Panc1 (cell line): ENCODE measurements at regions of chr1 and their contacts with region 1.

Region 1: GRCh38 chr1:97524211-97524610 is 396.6 kb downstream of the DPYD start:
- DNase-seq: no peak
- ATAC-seq: no peak
- H3K4me3 ChIP-seq: no peak overlapping the region
- H3K27ac ChIP-seq: no peak overlapping the region
- H3K4me1 ChIP-seq: no peaks in the 10 kb centered on the region
- H3K27me3 ChIP-seq: no peaks in the 10 kb centered on the region
- CTCF ChIP-seq: no peak

Region 2: DNA sequence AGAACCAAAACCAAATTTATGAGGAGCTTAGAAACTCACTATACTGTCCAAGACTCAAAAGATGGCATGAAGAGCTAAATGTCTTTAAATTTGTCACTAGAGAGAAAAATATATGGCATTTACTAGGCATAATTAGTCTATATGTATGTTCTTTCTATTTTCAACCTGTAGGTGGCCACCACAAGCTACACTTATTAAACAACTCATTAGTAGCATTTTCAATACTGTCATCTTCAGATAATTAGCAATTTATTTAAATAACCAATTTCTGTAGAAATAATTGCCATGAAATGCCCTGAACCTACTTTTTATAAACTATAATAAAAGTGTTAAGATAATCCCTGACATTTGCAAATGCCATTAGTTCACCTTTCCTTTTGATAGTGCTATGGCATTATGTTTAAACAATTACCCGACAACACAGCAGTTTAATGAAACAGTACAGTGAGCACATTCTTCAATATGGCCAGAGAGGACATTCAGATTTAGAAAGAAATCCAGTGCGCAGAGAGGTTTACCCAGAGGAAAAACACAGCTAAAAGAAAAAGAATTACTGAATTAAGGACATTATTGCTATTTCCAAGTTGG is 280.1 kb before region 1 on chr1:
- CTCF ChIA-PET with region 1: interaction called, 10 read pairs
- POLR2A ChIA-PET with region 1: no interaction called
- in situ Hi-C with region 1: no loop called
- intact Hi-C with region 1: no loop called
- DNase-seq: no peak
- ATAC-seq: no peak
- H3K4me3 ChIP-seq: no peak overlapping the region
- H3K27ac ChIP-seq: no peak overlapping the region
- H3K4me1 ChIP-seq: no peaks in the 10 kb centered on the region
- H3K27me3 ChIP-seq: no peaks in the 10 kb centered on the region
- CTCF ChIP-seq: peak; percentile 47; the same call in 1 of the 2 replicates

Region 3: GRCh38 chr1:97350662-97351061 is 173.5 kb before region 1 on chr1:
- CTCF ChIA-PET with region 1: no interaction called
- POLR2A ChIA-PET with region 1: no interaction called
- in situ Hi-C with region 1: no loop called
- intact Hi-C with region 1: no loop called
- DNase-seq: no peak
- ATAC-seq: no peak
- H3K4me3 ChIP-seq: no peak overlapping the region
- H3K27ac ChIP-seq: no peak overlapping the region
- H3K4me1 ChIP-seq: no peaks in the 10 kb centered on the region
- H3K27me3 ChIP-seq: no peaks in the 10 kb centered on the region
- CTCF ChIP-seq: no peak

Region 4: GRCh38 chr1:97505816-97506215 is 18.4 kb before region 1 on chr1:
- CTCF ChIA-PET with region 1: no interaction called
- POLR2A ChIA-PET with region 1: no interaction called
- in situ Hi-C with region 1: no loop called
- intact Hi-C with region 1: no loop called
- DNase-seq: no peak
- ATAC-seq: no peak
- H3K4me3 ChIP-seq: no peak overlapping the region
- H3K27ac ChIP-seq: no peak overlapping the region
- H3K4me1 ChIP-seq: no peaks in the 10 kb centered on the region
- H3K27me3 ChIP-seq: no peaks in the 10 kb centered on the region
- CTCF ChIP-seq: no peak

Region 5: GRCh38 chr1:97610748-97611147 is 86.5 kb after region 1 on chr1:
- CTCF ChIA-PET with region 1: no interaction called
- POLR2A ChIA-PET with region 1: no interaction called
- in situ Hi-C with region 1: no loop called
- intact Hi-C with region 1: no loop called
- DNase-seq: no peak
- ATAC-seq: no peak
- H3K4me3 ChIP-seq: no peak overlapping the region
- H3K27ac ChIP-seq: no peak overlapping the region
- H3K4me1 ChIP-seq: no peaks in the 10 kb centered on the region
- H3K27me3 ChIP-seq: no peaks in the 10 kb centered on the region
- CTCF ChIP-seq: no peak

Region 6: DNA sequence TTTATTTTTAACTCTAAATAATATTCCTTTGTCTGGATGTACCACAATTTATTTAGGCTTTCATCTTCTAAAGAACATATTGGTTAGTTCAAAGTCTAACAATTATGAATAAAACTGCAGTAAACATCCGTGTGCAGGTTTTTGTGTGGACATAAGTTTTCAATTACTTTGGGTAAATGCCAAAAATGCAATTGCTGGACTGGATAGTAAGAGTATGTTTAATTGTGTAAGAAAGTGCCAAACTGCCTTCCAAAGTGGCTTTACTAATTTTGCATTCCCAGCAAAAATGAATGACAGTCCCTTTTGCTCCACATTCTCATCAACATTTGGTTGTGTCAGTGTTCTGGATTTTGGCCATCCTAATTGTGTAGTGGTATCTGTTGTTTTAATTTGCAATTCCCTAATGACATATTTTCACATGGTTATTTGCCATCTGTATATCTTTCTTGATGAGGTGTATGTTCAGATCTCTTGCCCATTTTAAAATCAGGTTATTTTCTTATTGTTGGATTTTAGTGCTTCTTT is 282.8 kb after region 1 on chr1:
- CTCF ChIA-PET with region 1: no interaction called
- POLR2A ChIA-PET with region 1: interaction called, 10 read pairs
- in situ Hi-C with region 1: no loop called
- intact Hi-C with region 1: no loop called
- DNase-seq: no peak
- ATAC-seq: no peak
- H3K4me3 ChIP-seq: no peak overlapping the region
- H3K27ac ChIP-seq: no peak overlapping the region
- H3K4me1 ChIP-seq: no peaks in the 10 kb centered on the region
- H3K27me3 ChIP-seq: no peaks in the 10 kb centered on the region
- CTCF ChIP-seq: no peak